Left ventricle myocardium inferior (tissue), 1 donor: ENCODE measurements at regions of chr3 and their contacts with region 1.

Region 1: GRCh38 chr3:42012935-42013690 is 51.2 kb upstream of the ULK4 start:
- DNase-seq: peak; percentile 79
- H3K4me3 ChIP-seq: peak overlapping the region; percentile 80
- H3K27ac ChIP-seq: peak overlapping the region; percentile 98
- H3K4me1 ChIP-seq: peaks cover 52% of the 10 kb centered on the region
- H3K27me3 ChIP-seq: no peaks in the 10 kb centered on the region
- CTCF ChIP-seq: peak; percentile 17

Region 2: GRCh38 chr3:41872157-41872556 is 141.0 kb before region 1 on chr3:
- intact Hi-C with region 1: no loop called
- DNase-seq: no peak
- H3K4me3 ChIP-seq: no peak overlapping the region
- H3K27ac ChIP-seq: no peak overlapping the region
- H3K4me1 ChIP-seq: no peaks in the 10 kb centered on the region
- H3K27me3 ChIP-seq: no peaks in the 10 kb centered on the region
- CTCF ChIP-seq: no peak

Region 3: DNA sequence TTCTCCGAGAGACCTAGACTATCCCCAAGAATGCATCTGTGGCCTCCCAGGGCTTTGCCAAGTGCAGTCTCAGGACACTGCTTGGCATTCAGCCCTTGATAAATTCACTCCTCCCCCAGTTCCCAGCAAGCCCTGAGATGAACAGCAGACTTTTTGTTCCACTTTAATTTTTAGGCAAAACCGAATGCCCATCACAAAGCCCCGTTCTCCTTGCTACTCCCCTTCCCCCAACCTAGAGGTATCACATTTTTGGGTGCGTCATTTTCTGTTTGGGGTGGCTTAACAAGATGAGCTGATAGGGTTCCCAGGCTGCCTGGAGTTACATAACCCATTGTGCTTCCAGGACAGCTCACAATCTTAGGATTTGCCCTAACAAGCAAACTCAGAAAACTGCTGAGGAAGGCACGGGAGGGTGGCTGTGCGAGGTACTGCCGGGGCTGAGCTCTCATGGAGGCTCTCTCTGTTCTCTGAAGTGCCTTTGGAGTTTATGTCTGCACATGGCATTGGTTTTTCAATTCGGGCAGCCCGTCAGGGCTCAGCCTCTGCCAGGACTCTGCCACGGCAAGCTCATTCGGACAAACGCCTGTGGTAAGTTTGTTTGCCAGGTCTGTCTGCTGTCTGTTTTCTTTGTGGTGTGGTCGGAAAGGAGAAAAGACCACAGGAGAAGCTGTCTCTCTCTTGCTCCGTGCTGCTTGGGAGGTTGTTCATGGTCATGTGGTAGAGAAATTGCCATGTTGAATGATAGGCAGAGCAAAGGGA is 78.0 kb after region 1 on chr3 and contains the start of gene TRAK1:
- intact Hi-C with region 1: loop called (anchors 10 kb)
- DNase-seq: peak; percentile 44
- H3K4me3 ChIP-seq: peak within 1 kb of the TSS; percentile 56
- H3K27ac ChIP-seq: peak within 1 kb of the TSS; percentile 88
- H3K4me1 ChIP-seq: peaks cover 97% of the 10 kb centered on the region
- H3K27me3 ChIP-seq: no peaks in the 10 kb centered on the region
- CTCF ChIP-seq: peak; percentile 16
- total RNA-seq, gene TRAK1: 264 TPM

Region 4: DNA sequence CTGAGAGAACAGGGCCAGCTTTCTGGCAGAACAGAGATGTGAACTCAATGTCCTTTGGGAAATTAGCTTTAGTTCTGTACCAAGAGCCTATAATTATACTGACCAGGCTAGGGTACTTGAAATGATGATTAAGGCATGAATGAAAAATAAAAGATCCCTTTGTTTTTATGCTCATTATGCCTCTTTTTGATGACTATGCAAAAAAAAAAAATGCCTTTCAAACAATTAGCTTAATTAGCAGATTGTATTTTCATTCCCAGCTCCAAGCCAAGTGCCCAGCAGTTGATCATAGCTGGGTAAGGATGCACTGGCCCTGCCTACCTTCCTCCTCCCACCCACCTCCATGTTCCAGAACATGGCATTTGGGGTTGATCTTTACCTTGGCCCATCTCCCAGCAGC is 340.5 kb after region 1 on chr3:
- intact Hi-C with region 1: no loop called
- DNase-seq: no peak
- H3K4me3 ChIP-seq: no peak overlapping the region
- H3K27ac ChIP-seq: no peak overlapping the region
- H3K4me1 ChIP-seq: no peaks in the 10 kb centered on the region
- H3K27me3 ChIP-seq: peaks cover 32% of the 10 kb centered on the region
- CTCF ChIP-seq: no peak